B cell (primary cell): ENCODE measurements at regions of chr4 and their contacts with region 1.

Region 1: GRCh38 chr4:10535912-10536311 is 78.7 kb upstream of the ZNF518B start:
- DNase-seq: no peak
- ATAC-seq: no peak
- H3K4me3 ChIP-seq: no peak overlapping the region
- H3K4me3 Mint-ChIP-seq: no peak overlapping the region
- H3K27ac ChIP-seq: no peak overlapping the region
- H3K27ac Mint-ChIP-seq: no peak overlapping the region
- H3K4me1 ChIP-seq: no peaks in the 10 kb centered on the region
- H3K4me1 Mint-ChIP-seq: peaks cover 5% of the 10 kb centered on the region
- H3K27me3 ChIP-seq: no peaks in the 10 kb centered on the region
- H3K27me3 Mint-ChIP-seq: peaks cover 6% of the 10 kb centered on the region
- CTCF ChIP-seq: no peak

Region 2: GRCh38 chr4:9762823-9763475 is 773.0 kb before region 1 on chr4:
- CTCF ChIA-PET with region 1: interaction called, 3 read pairs
- POLR2A ChIA-PET with region 1: no interaction called
- intact Hi-C with region 1: loop called (anchors 2 kb)
- DNase-seq: peak; percentile 48
- ATAC-seq: no peak
- H3K4me3 ChIP-seq: no peak overlapping the region
- H3K4me3 Mint-ChIP-seq: no peak overlapping the region
- H3K27ac ChIP-seq: no peak overlapping the region
- H3K27ac Mint-ChIP-seq: no peak overlapping the region
- H3K4me1 ChIP-seq: no peaks in the 10 kb centered on the region
- H3K4me1 Mint-ChIP-seq: no peaks in the 10 kb centered on the region
- H3K27me3 ChIP-seq: no peaks in the 10 kb centered on the region
- H3K27me3 Mint-ChIP-seq: peaks cover 14% of the 10 kb centered on the region
- CTCF ChIP-seq: peak; percentile 45

Region 3: DNA sequence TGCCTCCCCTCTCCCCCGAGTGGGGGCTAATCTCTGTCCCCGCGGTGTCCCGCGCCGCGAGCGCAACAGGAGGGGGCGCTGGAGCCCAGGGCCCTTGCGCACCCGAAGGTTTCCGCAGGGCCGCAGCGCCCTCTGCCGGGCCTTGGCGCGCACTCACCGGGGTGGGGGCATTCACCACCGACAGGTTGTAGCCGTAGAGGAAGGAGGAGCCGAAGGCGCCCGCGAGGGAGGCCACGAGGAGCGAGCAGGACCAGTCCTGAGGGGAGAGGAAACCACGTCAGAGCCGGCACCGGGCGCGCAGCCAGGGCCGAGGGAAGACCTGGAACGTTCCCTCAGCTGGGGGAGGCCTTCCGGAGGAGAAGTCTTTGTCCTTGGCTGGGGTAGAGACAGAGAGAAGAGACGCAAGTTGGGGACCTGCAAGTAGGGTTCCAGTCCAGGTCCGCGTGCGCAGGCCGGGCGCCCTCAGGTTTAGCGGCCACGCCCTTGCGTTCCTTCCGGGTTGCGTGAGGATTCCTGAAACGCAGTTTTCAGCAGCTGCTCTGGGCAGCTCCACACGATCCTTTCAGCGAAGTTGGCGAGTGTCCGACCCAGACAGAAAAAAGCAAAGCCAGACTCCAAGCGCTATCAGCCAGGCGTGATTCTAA is 517.0 kb before region 1 on chr4:
- CTCF ChIA-PET with region 1: interaction called, 3 read pairs
- POLR2A ChIA-PET with region 1: no interaction called
- intact Hi-C with region 1: loop called (anchors 5 kb)
- DNase-seq: peak; percentile 89
- ATAC-seq: peak; percentile 98
- H3K4me3 ChIP-seq: peak overlapping the region; percentile 27 to 66 (median 64)
- H3K4me3 Mint-ChIP-seq: peak overlapping the region; percentile 91
- H3K27ac ChIP-seq: peak overlapping the region; percentile 73 to 77
- H3K27ac Mint-ChIP-seq: peak overlapping the region; percentile 89
- H3K4me1 ChIP-seq: peaks cover 22 to 42% of the 10 kb centered on the region in 2 donors
- H3K4me1 Mint-ChIP-seq: peaks cover 46% of the 10 kb centered on the region
- H3K27me3 ChIP-seq: no peaks in the 10 kb centered on the region
- H3K27me3 Mint-ChIP-seq: no peaks in the 10 kb centered on the region
- CTCF ChIP-seq: peak; percentile 98

Region 4: DNA sequence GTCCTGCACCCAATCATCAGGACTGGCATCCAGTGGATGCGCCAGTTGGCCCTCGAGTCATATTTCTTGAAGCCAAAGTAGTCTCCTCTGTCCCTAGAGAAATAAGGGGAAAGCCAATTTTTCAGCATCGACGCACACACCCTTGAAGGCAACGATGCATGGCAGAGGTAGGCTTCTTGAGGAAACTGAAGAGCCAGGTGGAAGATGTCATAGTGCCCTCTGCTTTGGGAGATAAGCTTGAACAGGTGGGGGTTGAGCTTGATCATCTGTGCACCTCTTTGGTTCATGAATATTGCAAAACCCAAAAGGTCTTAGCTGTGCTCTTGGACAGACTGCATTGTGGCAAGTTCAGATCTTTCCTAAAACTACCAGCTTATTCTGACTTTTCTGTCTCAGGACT is 384.7 kb before region 1 on chr4:
- CTCF ChIA-PET with region 1: interaction called, 11 read pairs
- POLR2A ChIA-PET with region 1: no interaction called
- intact Hi-C with region 1: no loop called
- DNase-seq: peak; percentile 86
- ATAC-seq: peak; percentile 94
- H3K4me3 ChIP-seq: no peak overlapping the region
- H3K4me3 Mint-ChIP-seq: peak overlapping the region; percentile 17
- H3K27ac ChIP-seq: no peak overlapping the region
- H3K27ac Mint-ChIP-seq: peak overlapping the region; percentile 23
- H3K4me1 ChIP-seq: peaks cover 20% of the 10 kb centered on the region in 2 donors
- H3K4me1 Mint-ChIP-seq: peaks cover 30% of the 10 kb centered on the region
- H3K27me3 ChIP-seq: peaks cover 0 to 28% (median 12%) of the 10 kb centered on the region in 4 experiments
- H3K27me3 Mint-ChIP-seq: peaks cover 40% of the 10 kb centered on the region
- CTCF ChIP-seq: no peak

Region 5: GRCh38 chr4:10157478-10158332 is 378.2 kb before region 1 on chr4:
- CTCF ChIA-PET with region 1: interaction called, 116 read pairs
- POLR2A ChIA-PET with region 1: no interaction called
- intact Hi-C with region 1: loop called (anchors 1 kb)
- DNase-seq: peak; percentile 59
- ATAC-seq: peak; percentile 76
- H3K4me3 ChIP-seq: no peak overlapping the region
- H3K4me3 Mint-ChIP-seq: no peak overlapping the region
- H3K27ac ChIP-seq: no peak overlapping the region
- H3K27ac Mint-ChIP-seq: no peak overlapping the region
- H3K4me1 ChIP-seq: no peaks in the 10 kb centered on the region
- H3K4me1 Mint-ChIP-seq: peaks cover 5% of the 10 kb centered on the region
- H3K27me3 ChIP-seq: peaks cover 0 to 13% (median 10%) of the 10 kb centered on the region in 4 experiments
- H3K27me3 Mint-ChIP-seq: peaks cover 43% of the 10 kb centered on the region
- CTCF ChIP-seq: peak; percentile 78

Region 6: GRCh38 chr4:10164877-10165283 is 371.0 kb before region 1 on chr4:
- CTCF ChIA-PET with region 1: interaction called, 116 read pairs
- POLR2A ChIA-PET with region 1: no interaction called
- intact Hi-C with region 1: loop called (anchors 2 kb)
- DNase-seq: no peak
- ATAC-seq: no peak
- H3K4me3 ChIP-seq: no peak overlapping the region
- H3K4me3 Mint-ChIP-seq: no peak overlapping the region
- H3K27ac ChIP-seq: no peak overlapping the region
- H3K27ac Mint-ChIP-seq: no peak overlapping the region
- H3K4me1 ChIP-seq: no peaks in the 10 kb centered on the region
- H3K4me1 Mint-ChIP-seq: no peaks in the 10 kb centered on the region
- H3K27me3 ChIP-seq: peaks cover 0 to 2% (median 0%) of the 10 kb centered on the region in 4 experiments
- H3K27me3 Mint-ChIP-seq: peaks cover 26% of the 10 kb centered on the region
- CTCF ChIP-seq: peak; percentile 58

Region 7: DNA sequence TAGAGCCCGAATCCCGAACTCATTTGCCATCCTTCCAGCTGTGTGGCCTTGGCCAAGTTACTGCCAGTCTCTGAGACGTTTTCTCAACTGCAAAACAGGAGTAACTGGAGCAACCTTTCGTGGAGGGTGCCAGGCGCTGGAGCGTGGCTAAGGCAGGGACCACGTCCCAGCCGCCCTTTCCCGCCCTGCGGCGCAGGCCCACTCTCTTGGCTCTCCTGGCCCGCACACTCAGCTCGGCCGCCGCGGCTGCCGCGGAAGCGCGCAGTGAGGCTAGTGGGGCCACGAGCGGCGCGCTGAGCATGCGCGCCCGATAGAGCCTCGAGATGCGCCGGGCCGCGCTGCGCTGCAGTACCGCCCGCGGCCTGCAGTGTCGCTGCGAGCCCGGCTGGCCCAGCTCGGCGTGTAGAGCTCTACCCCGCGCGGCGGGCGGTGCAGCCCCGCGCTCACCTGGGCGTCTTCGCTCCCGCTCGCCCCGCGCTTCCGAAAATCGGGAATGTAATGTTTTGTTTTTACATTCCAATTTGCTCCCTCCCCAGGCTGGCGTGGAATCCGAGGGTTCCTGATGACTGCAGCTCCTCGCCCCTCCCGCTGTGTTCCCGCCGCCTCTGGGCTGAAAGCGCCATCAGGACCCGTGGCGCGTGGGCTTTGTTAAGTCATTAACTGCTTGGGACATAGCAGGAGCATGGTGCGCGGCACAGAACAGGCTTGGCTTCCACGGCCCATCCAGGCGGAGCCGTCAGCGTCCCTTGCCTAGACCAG is 74.6 kb before region 1 on chr4:
- CTCF ChIA-PET with region 1: interaction called, 11 read pairs
- POLR2A ChIA-PET with region 1: no interaction called
- intact Hi-C with region 1: loop called (anchors 2 kb)
- DNase-seq: peak; percentile 91
- ATAC-seq: peak; percentile 82
- H3K4me3 ChIP-seq: peak overlapping the region; percentile 27 to 62 (median 48)
- H3K4me3 Mint-ChIP-seq: peak overlapping the region; percentile 82
- H3K27ac ChIP-seq: no peak overlapping the region
- H3K27ac Mint-ChIP-seq: no peak overlapping the region
- H3K4me1 ChIP-seq: peaks cover 13 to 25% of the 10 kb centered on the region in 2 donors
- H3K4me1 Mint-ChIP-seq: peaks cover 21% of the 10 kb centered on the region
- H3K27me3 ChIP-seq: peaks cover 0 to 40% (median 17%) of the 10 kb centered on the region in 4 experiments
- H3K27me3 Mint-ChIP-seq: peaks cover 48% of the 10 kb centered on the region
- CTCF ChIP-seq: peak; percentile 99

Region 8: DNA sequence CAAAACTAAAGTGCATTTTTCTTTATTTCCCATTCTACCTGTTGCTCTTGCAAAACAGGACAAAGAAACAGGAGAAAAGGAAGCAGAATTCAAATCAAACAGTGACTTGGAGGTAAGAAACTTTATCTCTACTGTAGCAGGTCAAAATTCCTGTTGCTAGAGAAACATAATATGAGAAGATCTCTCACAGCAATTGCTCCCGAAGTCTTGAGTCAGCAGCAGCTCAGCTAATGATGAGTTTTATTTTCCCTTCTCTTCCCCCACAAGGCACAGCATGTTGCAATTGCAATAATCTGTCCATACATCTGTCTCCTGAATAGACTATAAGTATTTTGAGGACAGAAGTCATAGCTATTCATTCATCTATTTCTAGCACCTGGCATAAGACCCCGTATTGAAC is 36.0 kb after region 1 on chr4:
- CTCF ChIA-PET with region 1: no interaction called
- POLR2A ChIA-PET with region 1: no interaction called
- intact Hi-C with region 1: no loop called
- DNase-seq: no peak
- ATAC-seq: no peak
- H3K4me3 ChIP-seq: no peak overlapping the region
- H3K4me3 Mint-ChIP-seq: no peak overlapping the region
- H3K27ac ChIP-seq: no peak overlapping the region
- H3K27ac Mint-ChIP-seq: no peak overlapping the region
- H3K4me1 ChIP-seq: peaks cover 6 to 14% of the 10 kb centered on the region in 2 donors
- H3K4me1 Mint-ChIP-seq: peaks cover 15% of the 10 kb centered on the region
- H3K27me3 ChIP-seq: no peaks in the 10 kb centered on the region
- H3K27me3 Mint-ChIP-seq: peaks cover 5% of the 10 kb centered on the region
- CTCF ChIP-seq: no peak